Activated B cell treated with CpG ODN at 0.5 μM for 24 hours (primary cell): ENCODE measurements at regions of chr2 and their contacts with region 1.

Region 1: GRCh38 chr2:177332041-177332991 is 60.3 kb upstream of the AGPS start:
- DNase-seq: no peak
- ATAC-seq: peak; percentile 94
- H3K4me3 Mint-ChIP-seq: peak overlapping the region; percentile 46
- H3K27ac Mint-ChIP-seq: peak overlapping the region; percentile 50
- H3K4me1 Mint-ChIP-seq: peaks cover 9% of the 10 kb centered on the region
- H3K27me3 Mint-ChIP-seq: no peaks in the 10 kb centered on the region
- CTCF ChIP-seq: no peak

Region 2: GRCh38 chr2:177296040-177296439 is 36.3 kb before region 1 on chr2:
- CTCF ChIA-PET with region 1: interaction called, 3 read pairs
- POLR2A ChIA-PET with region 1: no interaction called
- intact Hi-C with region 1: loop called (anchors 5 kb)
- DNase-seq: no peak
- ATAC-seq: peak; percentile 57
- H3K4me3 Mint-ChIP-seq: no peak overlapping the region
- H3K27ac Mint-ChIP-seq: peak overlapping the region; percentile 8
- H3K4me1 Mint-ChIP-seq: peaks cover 3% of the 10 kb centered on the region
- H3K27me3 Mint-ChIP-seq: no peaks in the 10 kb centered on the region
- CTCF ChIP-seq: no peak

Region 3: DNA sequence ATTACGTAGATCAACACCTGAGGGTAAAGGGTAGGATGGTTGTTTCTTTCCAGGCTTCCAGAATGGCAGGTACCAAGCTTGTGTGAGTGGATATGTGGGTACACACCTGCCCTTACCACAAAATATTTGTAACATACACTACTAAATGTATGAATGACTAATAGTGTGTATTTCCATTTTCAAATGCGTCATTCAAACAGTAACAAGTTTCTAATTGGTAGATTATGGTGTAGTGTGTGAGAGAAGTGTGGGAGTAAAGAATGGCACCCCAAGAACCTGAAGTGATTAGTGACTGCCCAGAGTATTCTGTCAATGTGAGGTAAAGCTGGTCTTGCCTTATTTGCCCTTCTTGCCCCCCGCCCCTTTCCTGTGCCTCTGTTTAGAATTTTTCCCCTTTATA is 81.4 kb after region 1 on chr2:
- CTCF ChIA-PET with region 1: interaction called, 76 read pairs
- POLR2A ChIA-PET with region 1: no interaction called
- intact Hi-C with region 1: loop called (anchors 1 kb)
- DNase-seq: no peak
- ATAC-seq: no peak
- H3K4me3 Mint-ChIP-seq: no peak overlapping the region
- H3K27ac Mint-ChIP-seq: no peak overlapping the region
- H3K4me1 Mint-ChIP-seq: peaks cover 1% of the 10 kb centered on the region
- H3K27me3 Mint-ChIP-seq: no peaks in the 10 kb centered on the region
- CTCF ChIP-seq: no peak

Region 4: DNA sequence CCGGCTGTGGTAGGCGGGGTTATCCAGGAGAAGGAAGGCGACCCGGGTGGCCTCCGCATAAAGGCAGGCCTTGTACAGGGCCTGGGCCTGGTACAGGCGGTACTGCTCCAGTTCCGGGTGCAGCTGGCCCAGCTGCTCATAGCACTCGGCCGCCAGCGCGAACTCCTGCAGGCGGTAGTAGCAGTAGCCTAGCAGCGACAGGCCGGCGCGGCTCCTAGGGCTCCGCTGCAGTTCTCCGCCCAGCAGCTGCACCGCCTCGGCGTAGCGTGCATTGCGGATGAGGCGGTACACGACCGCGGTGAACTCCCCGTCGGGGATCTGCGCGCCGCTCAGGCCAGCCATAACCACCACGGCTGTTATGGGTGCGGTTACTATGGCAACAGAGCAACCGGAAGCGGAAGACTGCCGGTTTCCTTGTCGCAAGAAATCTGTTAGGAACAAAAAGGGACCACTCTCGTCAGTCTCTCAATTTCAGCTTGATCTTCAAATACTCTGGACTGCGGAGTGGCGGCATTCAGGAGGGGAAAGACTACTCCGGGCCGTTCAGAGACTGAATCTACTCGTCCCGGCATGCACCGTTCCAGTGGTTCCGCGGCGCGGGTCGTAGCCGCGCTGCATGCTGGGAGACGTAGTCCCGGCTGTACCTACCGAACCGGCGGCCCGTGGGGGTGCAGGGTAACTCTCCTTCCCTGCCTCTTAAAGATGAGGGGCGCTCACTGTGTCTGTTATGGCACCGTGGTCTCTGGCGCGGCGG is 220.3 kb after region 1 on chr2:
- CTCF ChIA-PET with region 1: interaction called, 3 read pairs
- POLR2A ChIA-PET with region 1: no interaction called
- intact Hi-C with region 1: loop called (anchors 5 kb)
- DNase-seq: peak; percentile 87
- ATAC-seq: peak; percentile 90
- H3K4me3 Mint-ChIP-seq: peak overlapping the region; percentile 96
- H3K27ac Mint-ChIP-seq: peak overlapping the region; percentile 100
- H3K4me1 Mint-ChIP-seq: peaks cover 17% of the 10 kb centered on the region
- H3K27me3 Mint-ChIP-seq: no peaks in the 10 kb centered on the region
- CTCF ChIP-seq: no peak

Region 5: DNA sequence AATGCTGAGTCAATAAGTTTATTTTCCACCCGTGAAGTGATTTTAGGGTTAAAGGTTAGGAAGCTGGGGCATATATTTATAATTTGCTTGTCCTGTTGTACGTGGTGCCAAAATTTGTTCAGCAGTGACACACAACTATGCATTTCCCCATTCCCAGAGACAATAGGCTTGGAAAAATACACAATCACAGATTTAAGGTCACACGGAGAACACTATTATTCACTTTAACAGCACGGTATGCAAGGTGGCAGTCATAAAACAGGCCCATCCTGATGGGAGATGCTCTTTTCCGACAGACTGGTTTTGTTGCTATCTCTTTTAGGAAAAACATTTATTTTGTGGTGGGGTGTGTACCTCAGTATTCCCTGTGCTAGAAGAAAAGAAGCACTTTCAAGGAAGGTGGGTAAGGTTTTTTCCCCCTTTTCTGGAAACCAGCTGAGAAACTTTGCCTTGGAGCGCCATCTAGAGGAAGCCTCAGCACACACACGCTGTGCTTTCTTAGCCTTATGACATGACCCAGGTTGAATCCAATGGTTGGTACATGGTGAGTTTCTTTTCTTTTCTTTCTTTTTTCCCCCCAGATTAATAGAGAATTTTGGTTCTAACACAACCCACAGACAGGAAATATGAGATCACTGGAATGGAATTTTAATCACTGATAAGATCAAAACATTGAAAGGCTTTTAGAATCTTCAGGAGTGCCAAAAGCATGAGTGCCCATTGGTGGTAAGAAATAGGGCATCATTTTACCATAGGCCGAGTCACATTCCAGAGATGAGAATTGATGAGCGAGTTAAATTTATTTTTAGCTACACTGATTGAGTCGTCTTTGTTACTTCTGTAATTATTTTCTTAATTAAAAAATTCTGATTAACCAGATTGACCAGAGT is 392.3 kb after region 1 on chr2:
- CTCF ChIA-PET with region 1: interaction called, 43 read pairs
- POLR2A ChIA-PET with region 1: no interaction called
- intact Hi-C with region 1: loop called (anchors 1 kb)
- DNase-seq: no peak
- ATAC-seq: peak; percentile 60
- H3K4me3 Mint-ChIP-seq: no peak overlapping the region
- H3K27ac Mint-ChIP-seq: no peak overlapping the region
- H3K4me1 Mint-ChIP-seq: no peaks in the 10 kb centered on the region
- H3K27me3 Mint-ChIP-seq: peaks cover 14% of the 10 kb centered on the region
- CTCF ChIP-seq: peak; percentile 45

Region 6: GRCh38 chr2:178450774-178451525 is 1118.6 kb after region 1 on chr2 and contains the starts of genes PJVK and PRKRA:
- CTCF ChIA-PET with region 1: no interaction called
- POLR2A ChIA-PET with region 1: no interaction called
- intact Hi-C with region 1: loop called (anchors 10 kb)
- DNase-seq: peak; percentile 97
- ATAC-seq: peak; percentile 91
- H3K4me3 Mint-ChIP-seq: peak within 1 kb of the TSS; percentile 87
- H3K27ac Mint-ChIP-seq: peak within 1 kb of the TSS; percentile 86
- H3K4me1 Mint-ChIP-seq: peaks cover 28% of the 10 kb centered on the region
- H3K27me3 Mint-ChIP-seq: no peaks in the 10 kb centered on the region
- CTCF ChIP-seq: no peak
- total RNA-seq, gene PJVK: 2.0 and 3.1 TPM in 2 replicates
- total RNA-seq, gene PRKRA: 49.6 and 61.3 TPM in 2 replicates